Right cardiac atrium (tissue), 5 donors: ENCODE measurements at regions of chr21 and their contacts with region 1.

Region 1: GRCh38 chr21:15058854-15059263 is 5.9 kb downstream of the NRIP1 start:
- DNase-seq: no peak
- ATAC-seq: peak in 1 of 2 donors; percentile 35
- H3K4me3 ChIP-seq: peak overlapping the region; percentile 28
- H3K27ac ChIP-seq: no peak overlapping the region
- H3K4me1 ChIP-seq: peaks cover 5% of the 10 kb centered on the region
- H3K27me3 ChIP-seq: no peaks in the 10 kb centered on the region

Region 2: GRCh38 chr21:15192243-15192642 is 133.4 kb after region 1 on chr21:
- intact Hi-C with region 1: no loop called
- DNase-seq: no peak
- ATAC-seq: no peak
- H3K4me3 ChIP-seq: no peak overlapping the region
- H3K27ac ChIP-seq: no peak overlapping the region
- H3K4me1 ChIP-seq: no peaks in the 10 kb centered on the region
- H3K27me3 ChIP-seq: no peaks in the 10 kb centered on the region

Region 3: DNA sequence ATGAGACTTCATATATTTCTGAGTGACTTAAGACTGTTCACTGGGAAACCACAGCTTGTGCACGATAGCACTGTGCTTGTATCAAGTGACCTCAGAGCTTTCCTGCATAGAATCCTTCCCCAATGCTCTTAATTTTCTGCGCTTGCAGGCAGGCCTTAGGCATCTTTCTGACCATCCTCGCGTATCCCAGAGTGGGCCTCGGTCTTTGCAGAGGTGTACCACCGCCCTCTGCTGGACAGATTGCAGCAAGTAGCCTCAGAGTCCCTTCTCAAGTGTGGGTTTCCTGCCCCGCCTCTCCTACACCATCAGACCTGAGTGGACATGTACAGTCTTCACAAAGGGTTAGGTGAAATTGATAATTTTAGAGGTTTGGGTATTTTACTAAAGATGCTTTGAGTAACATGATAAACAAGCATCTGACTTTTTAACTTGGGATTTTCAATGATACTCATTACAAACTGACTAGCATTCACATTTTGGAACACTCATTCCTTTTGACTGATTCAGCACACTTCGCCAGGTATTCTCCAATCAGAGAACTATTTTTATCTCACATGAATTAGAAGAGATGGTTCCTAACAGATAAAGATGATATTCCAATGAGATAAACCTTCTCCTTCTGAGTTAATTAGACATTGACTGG is 424.4 kb after region 1 on chr21:
- intact Hi-C with region 1: loop called in 2 of 4 experiments (anchors 5 to 10 kb)
- DNase-seq: peak; percentile 86 to 94 (median 91)
- ATAC-seq: peak; percentile 99
- H3K4me3 ChIP-seq: no peak overlapping the region
- H3K27ac ChIP-seq: no peak overlapping the region
- H3K4me1 ChIP-seq: no peaks in the 10 kb centered on the region
- H3K27me3 ChIP-seq: no peaks in the 10 kb centered on the region